Colonic mucosa (tissue), 4 donors: ENCODE measurements at regions of chr5 and their contacts with region 1.

Region 1: GRCh38 chr5:154284433-154284832 is 93.9 kb downstream of the GALNT10 start:
- DNase-seq: no peak
- H3K4me3 ChIP-seq: no peak overlapping the region
- H3K27ac ChIP-seq: no peak overlapping the region
- H3K4me1 ChIP-seq: peaks cover 12% of the 10 kb centered on the region
- H3K27me3 ChIP-seq: no peaks in the 10 kb centered on the region
- CTCF ChIP-seq: no peak

Region 2: DNA sequence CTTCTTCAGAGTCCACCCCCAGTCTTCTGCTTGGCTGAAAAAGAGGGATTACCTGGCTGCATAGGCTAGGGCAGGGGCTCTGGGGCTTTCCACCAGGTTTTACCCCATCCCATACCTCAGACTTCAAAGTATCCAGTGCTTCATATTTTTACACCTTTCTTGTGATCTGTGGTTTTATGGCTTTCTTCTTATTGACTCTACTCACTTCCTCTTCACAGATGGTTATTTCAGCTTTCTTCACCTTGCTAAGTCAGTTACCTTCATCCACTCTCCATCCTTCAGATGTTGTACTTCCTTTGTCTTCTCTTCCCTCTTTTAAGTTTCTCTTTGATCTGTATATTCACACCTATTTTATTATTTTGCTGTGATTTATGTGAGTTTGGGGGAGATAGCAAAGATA is 689.6 kb before region 1 on chr5:
- intact Hi-C with region 1: no loop called
- DNase-seq: no peak
- H3K4me3 ChIP-seq: no peak overlapping the region
- H3K27ac ChIP-seq: no peak overlapping the region
- H3K4me1 ChIP-seq: no peaks in the 10 kb centered on the region
- H3K27me3 ChIP-seq: no peaks in the 10 kb centered on the region
- CTCF ChIP-seq: no peak

Region 3: DNA sequence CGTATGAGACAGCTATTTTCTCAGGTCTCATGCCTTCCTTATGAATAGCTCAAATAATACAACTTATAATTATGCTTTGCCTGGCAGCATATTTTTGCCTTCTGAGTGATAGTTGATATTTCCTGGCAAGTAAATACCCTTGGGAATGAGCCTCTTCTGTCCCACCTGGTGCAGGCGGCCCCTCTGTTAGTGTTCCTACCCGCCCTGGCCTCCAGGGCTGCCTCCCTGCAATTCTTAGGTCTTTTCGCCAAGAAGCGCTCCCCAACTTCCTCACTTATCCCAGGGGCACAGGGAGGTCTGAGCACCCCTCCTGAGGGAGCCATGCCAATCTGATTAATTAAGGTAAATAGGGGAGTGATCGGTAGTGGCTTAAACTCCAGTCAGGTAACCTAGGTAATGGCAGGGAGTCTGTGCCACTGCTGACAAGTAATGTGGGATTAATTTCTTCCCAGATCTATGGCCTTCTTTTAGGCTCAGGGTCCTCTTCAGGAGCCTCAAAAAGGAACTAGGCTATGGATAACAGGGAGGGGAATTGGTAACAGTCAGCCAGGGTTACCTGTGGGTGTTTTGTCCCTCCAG is 12.4 kb before region 1 on chr5:
- intact Hi-C with region 1: loop called (anchors 2 kb)
- DNase-seq: no peak
- H3K4me3 ChIP-seq: no peak overlapping the region
- H3K27ac ChIP-seq: no peak overlapping the region
- H3K4me1 ChIP-seq: peaks cover 6% of the 10 kb centered on the region
- H3K27me3 ChIP-seq: no peaks in the 10 kb centered on the region
- CTCF ChIP-seq: no peak

Region 4: GRCh38 chr5:154478224-154478565 is 193.8 kb after region 1 on chr5 and contains the start of gene HAND1:
- intact Hi-C with region 1: no loop called
- DNase-seq: peak; percentile 76
- H3K4me3 ChIP-seq: peak within 1 kb of the TSS; percentile 24
- H3K27ac ChIP-seq: no peak within 1 kb of the TSS
- H3K4me1 ChIP-seq: peaks cover 16% of the 10 kb centered on the region
- H3K27me3 ChIP-seq: peaks cover 99% of the 10 kb centered on the region
- CTCF ChIP-seq: no peak
- total RNA-seq, gene HAND1: 4.6 TPM in 1 of 2 donors, not detected in the other